ENCODE measurements at regions of chr6 and their contacts with region 1.

Region 1: DNA sequence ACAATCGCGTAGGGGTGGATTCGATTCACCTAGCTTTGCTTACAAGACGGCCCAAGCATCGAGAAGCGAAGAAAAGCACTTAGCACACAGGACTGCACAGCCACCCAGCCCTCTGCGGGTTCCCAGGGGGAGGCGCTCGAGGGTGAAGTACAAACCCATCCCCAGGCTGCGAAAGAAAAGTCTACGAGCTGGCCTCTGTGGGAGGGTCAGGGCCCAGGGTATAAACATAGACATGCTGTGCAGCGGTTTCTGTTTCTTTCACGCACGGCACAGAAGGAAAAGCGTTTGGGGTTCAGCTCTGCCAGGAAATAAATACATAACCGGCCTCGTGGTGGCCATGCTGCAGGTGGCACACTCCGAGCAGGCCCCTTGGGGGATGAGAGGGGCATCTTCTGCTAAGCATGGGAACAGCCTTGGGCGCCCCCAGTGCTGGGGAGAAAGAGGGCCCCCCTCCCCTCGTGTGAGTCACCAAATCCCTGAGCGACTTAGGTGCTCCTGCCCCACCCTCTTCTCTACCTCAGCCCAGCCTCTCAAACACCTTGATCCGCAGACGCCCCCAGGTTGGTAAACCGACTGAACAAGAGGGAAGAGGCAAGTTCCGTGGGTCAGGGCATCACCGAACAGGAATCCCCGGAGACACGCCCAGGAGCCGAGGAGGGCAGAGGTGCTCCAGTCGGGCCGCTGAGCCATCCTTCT is 91.6 kb upstream of the RIPOR2 start:
- DNase-seq: no peak
- H3K4me3 ChIP-seq: no peak overlapping the region
- H3K27ac ChIP-seq: no peak overlapping the region
- H3K4me1 ChIP-seq: peaks cover 0 to 9% (median 0%) of the 10 kb centered on the region in 4 experiments; a peak in 3 of 7 replicates
- H3K27me3 ChIP-seq: no peaks in the 10 kb centered on the region
- CTCF ChIP-seq: peak; percentile 31 to 40 (median 33); a peak in 3 of 4 replicates
- EP300 ChIP-seq: no peak
- POLR2A ChIP-seq: no peak
- RAD21 ChIP-seq: peak; percentile 29 to 42; a peak in 3 of 4 replicates

Region 2: DNA sequence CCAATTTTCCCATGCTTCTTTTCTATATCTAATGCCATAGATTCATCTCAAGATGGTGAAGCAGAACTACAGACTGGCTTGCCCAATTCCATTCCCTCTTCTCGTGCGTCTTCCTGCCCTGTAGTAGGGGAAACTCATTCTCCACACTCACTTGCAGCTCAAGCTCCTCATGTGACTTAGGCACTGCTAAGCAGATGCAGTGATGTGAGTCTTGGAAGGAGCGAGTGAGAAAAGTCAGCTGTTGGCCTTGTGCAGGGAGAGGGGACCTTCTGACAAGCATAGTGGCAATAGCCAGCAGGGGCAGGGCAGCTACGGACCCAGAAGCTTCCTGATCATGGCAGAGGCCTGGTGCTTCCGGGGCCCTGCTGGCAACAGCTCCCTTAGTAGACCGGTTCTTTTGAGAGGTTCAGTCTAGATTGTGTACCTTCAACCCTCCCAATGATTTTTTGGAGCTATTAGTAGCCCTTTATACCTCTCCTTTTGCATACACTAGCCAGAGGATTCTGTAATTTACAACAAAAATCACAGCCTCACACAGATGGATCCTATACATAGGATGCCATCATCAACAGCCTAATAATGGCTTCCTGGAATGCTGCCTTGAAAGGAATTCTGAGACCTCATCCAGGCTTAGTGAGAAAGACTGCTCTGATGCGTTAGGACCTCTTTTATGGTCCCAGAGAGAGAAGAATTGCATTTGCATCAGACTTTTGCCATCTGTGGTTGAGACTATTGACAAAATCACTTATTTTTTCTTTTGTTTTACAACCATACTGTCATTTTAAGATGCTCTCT is 29.9 kb after region 1 on chr6:
- CTCF ChIA-PET with region 1: no interaction called
- POLR2A ChIA-PET with region 1: no interaction called
- DNase-seq: no peak
- H3K4me3 ChIP-seq: no peak overlapping the region
- H3K27ac ChIP-seq: no peak overlapping the region
- H3K4me1 ChIP-seq: peaks cover 0 to 10% (median 5%) of the 10 kb centered on the region in 4 experiments; a peak in 6 of 7 replicates
- H3K27me3 ChIP-seq: no peaks in the 10 kb centered on the region
- CTCF ChIP-seq: no peak
- EP300 ChIP-seq: no peak
- POLR2A ChIP-seq: no peak
- RAD21 ChIP-seq: no peak

Region 3: DNA sequence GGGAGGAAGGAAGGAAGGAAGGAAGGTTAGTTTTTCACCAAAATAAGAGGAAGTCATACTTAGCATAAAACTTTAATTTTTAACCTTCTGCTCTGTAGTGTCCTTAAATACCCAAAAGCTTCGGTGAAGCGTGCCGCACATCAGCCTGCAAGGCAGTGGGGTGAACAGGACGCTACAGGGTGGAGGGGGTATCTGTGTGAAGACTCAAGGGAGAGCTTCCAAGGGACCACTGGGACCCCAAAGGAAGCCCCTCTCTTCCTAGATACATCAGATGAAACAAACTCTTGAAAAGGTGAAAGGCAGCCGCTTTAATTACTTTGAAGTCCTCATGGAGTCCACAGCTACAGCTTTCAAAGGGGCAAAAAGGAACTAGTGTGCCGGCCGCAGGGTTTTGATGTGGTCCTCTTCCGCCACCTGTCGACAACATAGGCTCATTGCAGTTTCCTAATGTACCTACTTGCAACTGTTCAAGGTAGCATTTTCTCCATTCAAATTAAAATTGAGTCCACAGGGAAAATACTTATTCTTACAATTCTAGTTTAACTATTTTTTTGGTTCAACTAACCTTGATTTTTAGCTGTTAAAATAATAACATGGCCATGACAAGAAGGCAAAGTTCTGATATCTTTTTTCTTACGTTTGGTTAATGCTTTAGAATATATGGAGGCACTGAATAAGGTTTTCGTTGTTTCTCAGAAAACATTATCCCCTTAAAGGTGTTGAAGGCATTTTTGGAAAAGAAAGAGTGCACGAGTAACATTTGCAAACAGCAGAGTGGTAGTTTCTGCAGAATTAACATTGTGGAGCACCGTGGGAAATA is 43.4 kb after region 1 on chr6:
- CTCF ChIA-PET with region 1: interaction called, 18 read pairs
- POLR2A ChIA-PET with region 1: no interaction called
- DNase-seq: peak; percentile 62 to 84
- H3K4me3 ChIP-seq: no peak overlapping the region
- H3K27ac ChIP-seq: no peak overlapping the region
- H3K4me1 ChIP-seq: no peaks in the 10 kb centered on the region; a peak in 1 of 7 replicates
- H3K27me3 ChIP-seq: no peaks in the 10 kb centered on the region
- CTCF ChIP-seq: peak; percentile 57 to 91 (median 74)
- EP300 ChIP-seq: no peak
- POLR2A ChIP-seq: no peak
- RAD21 ChIP-seq: peak; percentile 94 to 95

Region 4: GRCh38 chr6:25085756-25086155 is 58.4 kb after region 1 on chr6:
- CTCF ChIA-PET with region 1: no interaction called
- POLR2A ChIA-PET with region 1: no interaction called
- DNase-seq: no peak
- H3K4me3 ChIP-seq: no peak overlapping the region
- H3K27ac ChIP-seq: no peak overlapping the region
- H3K4me1 ChIP-seq: peaks cover 0 to 9% (median 1%) of the 10 kb centered on the region in 4 experiments; a peak in 2 of 7 replicates
- H3K27me3 ChIP-seq: no peaks in the 10 kb centered on the region
- CTCF ChIP-seq: no peak
- EP300 ChIP-seq: no peak
- POLR2A ChIP-seq: no peak
- RAD21 ChIP-seq: no peak

Region 5: DNA sequence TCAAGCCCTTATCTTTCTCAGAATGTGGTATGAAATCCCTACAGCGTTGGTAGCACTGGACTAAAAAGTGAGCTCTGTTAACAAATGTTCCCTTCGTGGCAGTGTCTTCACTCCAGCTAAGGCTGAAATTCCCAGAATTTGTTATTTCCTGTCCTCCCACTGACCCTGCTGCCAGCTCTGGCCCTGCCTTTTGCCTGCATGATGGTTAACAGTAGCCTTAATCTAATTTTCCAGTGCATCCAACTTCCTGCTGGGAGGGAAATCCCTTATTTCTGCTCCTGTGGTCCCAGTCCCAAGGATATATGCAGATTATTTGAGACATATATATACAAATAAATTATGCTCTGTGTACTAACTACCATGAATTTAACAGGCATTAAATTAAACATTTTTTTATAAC is 94.6 kb after region 1 on chr6:
- CTCF ChIA-PET with region 1: no interaction called
- POLR2A ChIA-PET with region 1: no interaction called
- DNase-seq: no peak
- H3K4me3 ChIP-seq: no peak overlapping the region
- H3K27ac ChIP-seq: no peak overlapping the region
- H3K4me1 ChIP-seq: no peaks in the 10 kb centered on the region
- H3K27me3 ChIP-seq: no peaks in the 10 kb centered on the region
- CTCF ChIP-seq: no peak
- EP300 ChIP-seq: no peak
- POLR2A ChIP-seq: no peak
- RAD21 ChIP-seq: no peak

Region 6: GRCh38 chr6:25156096-25156495 is 128.7 kb after region 1 on chr6:
- CTCF ChIA-PET with region 1: no interaction called
- POLR2A ChIA-PET with region 1: no interaction called
- DNase-seq: no peak
- H3K4me3 ChIP-seq: no peak overlapping the region
- H3K27ac ChIP-seq: no peak overlapping the region
- H3K4me1 ChIP-seq: no peaks in the 10 kb centered on the region
- H3K27me3 ChIP-seq: no peaks in the 10 kb centered on the region
- CTCF ChIP-seq: no peak
- EP300 ChIP-seq: no peak
- POLR2A ChIP-seq: no peak
- RAD21 ChIP-seq: no peak

Measured in H1 (cell line).